ENCODE measurements at regions of chr3 and their contacts with region 1.

Region 1: GRCh38 chr3:136396916-136397315 is 146.8 kb downstream of the PCCB start:
- DNase-seq: no peak
- H3K4me3 ChIP-seq: no peak overlapping the region
- H3K4me3 Mint-ChIP-seq: no peak overlapping the region
- H3K27ac ChIP-seq: no peak overlapping the region
- H3K27ac Mint-ChIP-seq: no peak overlapping the region
- H3K4me1 ChIP-seq: no peaks in the 10 kb centered on the region
- H3K4me1 Mint-ChIP-seq: peaks cover 0 to 2% (median 0%) of the 10 kb centered on the region in 3 donors
- H3K27me3 ChIP-seq: no peaks in the 10 kb centered on the region
- H3K27me3 Mint-ChIP-seq: no peaks in the 10 kb centered on the region

Region 2: GRCh38 chr3:135834465-135834864 is 562.5 kb before region 1 on chr3:
- CTCF ChIA-PET with region 1: no interaction called
- POLR2A ChIA-PET with region 1: no interaction called
- DNase-seq: no peak
- H3K4me3 ChIP-seq: no peak overlapping the region
- H3K4me3 Mint-ChIP-seq: no peak overlapping the region
- H3K27ac ChIP-seq: no peak overlapping the region
- H3K27ac Mint-ChIP-seq: no peak overlapping the region
- H3K4me1 ChIP-seq: no peaks in the 10 kb centered on the region
- H3K4me1 Mint-ChIP-seq: no peaks in the 10 kb centered on the region
- H3K27me3 ChIP-seq: no peaks in the 10 kb centered on the region
- H3K27me3 Mint-ChIP-seq: peaks cover 0 to 6% of the 10 kb centered on the region in 2 donors

Region 3: DNA sequence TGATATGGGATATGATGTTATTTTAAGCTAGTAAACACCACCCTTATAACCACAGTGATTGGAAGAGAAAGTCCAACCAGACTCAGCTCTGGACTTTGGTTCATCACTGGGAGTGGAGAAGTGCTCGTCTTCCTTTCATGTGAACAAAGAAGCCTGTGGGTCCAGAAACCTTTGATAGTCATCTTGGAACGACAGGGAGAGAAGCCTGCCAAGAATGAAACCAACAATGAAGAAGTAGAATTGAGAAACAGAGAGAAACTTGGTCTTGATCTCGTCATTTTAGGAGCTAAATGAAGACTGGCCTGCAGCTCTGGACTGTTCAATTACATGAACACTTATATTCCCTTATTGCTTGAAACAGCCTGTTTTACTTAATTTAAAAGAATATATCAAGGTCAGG is 408.9 kb after region 1 on chr3:
- CTCF ChIA-PET with region 1: no interaction called
- POLR2A ChIA-PET with region 1: interaction called, 15 read pairs
- DNase-seq: no peak
- H3K4me3 ChIP-seq: no peak overlapping the region
- H3K4me3 Mint-ChIP-seq: no peak overlapping the region
- H3K27ac ChIP-seq: no peak overlapping the region
- H3K27ac Mint-ChIP-seq: no peak overlapping the region
- H3K4me1 ChIP-seq: no peaks in the 10 kb centered on the region
- H3K4me1 Mint-ChIP-seq: no peaks in the 10 kb centered on the region
- H3K27me3 ChIP-seq: no peaks in the 10 kb centered on the region
- H3K27me3 Mint-ChIP-seq: peaks cover 0 to 2% of the 10 kb centered on the region in 2 donors